Breast epithelium (tissue), 4 donors: ENCODE measurements at regions of chr2 and their contacts with region 1.

Region 1: GRCh38 chr2:149365826-149366583 is 35.6 kb downstream of the LYPD6 start:
- DNase-seq: no peak
- H3K4me3 ChIP-seq: no peak overlapping the region
- H3K27ac ChIP-seq: no peak overlapping the region
- H3K4me1 ChIP-seq: no peaks in the 10 kb centered on the region
- H3K27me3 ChIP-seq: no peaks in the 10 kb centered on the region
- CTCF ChIP-seq: no peak
- POLR2A ChIP-seq: no peak

Region 2: DNA sequence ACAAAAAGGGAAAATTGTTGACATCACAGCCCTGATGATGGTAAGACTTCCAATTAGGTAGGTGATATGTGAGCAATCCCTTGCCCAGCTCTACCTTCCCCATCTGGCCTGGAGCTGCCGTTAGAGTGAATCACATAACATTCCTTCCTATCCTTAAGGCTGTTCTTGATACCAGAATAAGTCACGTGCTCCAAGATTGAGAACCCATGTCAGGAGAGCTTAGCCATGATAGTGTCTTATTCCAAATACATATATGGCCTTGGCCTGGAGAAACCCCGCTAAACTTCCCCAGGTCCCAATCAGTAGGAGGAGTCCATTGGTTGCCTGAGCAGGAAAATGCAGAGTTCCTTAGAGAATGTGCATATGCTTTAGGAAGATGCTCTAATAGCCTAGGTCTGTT is 1591.2 kb before region 1 on chr2:
- intact Hi-C with region 1: loop called (anchors 5 kb)
- DNase-seq: no peak
- H3K4me3 ChIP-seq: no peak overlapping the region
- H3K27ac ChIP-seq: no peak overlapping the region
- H3K4me1 ChIP-seq: no peaks in the 10 kb centered on the region
- H3K27me3 ChIP-seq: no peaks in the 10 kb centered on the region
- CTCF ChIP-seq: no peak
- POLR2A ChIP-seq: no peak

Region 3: GRCh38 chr2:150125708-150126107 is 759.7 kb after region 1 on chr2:
- intact Hi-C with region 1: no loop called
- DNase-seq: no peak
- H3K4me3 ChIP-seq: no peak overlapping the region
- H3K27ac ChIP-seq: peak overlapping the region in 1 of 2 donors; percentile 9
- H3K4me1 ChIP-seq: no peaks in the 10 kb centered on the region
- H3K27me3 ChIP-seq: no peaks in the 10 kb centered on the region
- CTCF ChIP-seq: no peak
- POLR2A ChIP-seq: no peak

Region 4: DNA sequence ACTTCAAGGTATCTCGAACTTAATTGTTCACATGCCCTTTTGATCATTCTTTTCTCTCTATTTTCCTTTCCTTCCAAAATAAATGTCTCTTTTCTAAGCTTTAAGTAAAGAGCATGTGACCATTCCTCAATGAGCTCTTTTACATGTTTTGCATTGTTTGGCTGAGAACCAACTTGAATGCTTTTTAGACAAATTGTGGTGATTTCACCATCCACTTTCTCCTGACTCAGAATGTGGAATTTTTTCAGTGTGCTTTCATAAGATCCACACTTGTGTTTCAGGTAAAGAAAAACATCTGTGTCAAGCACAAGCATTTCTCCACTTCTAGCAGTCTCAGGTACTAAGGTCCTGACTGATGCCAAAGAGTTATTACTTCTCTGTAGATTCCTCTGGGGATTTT is 1885.0 kb after region 1 on chr2:
- intact Hi-C with region 1: loop called (anchors 5 kb)
- DNase-seq: no peak
- H3K4me3 ChIP-seq: no peak overlapping the region
- H3K27ac ChIP-seq: no peak overlapping the region
- H3K4me1 ChIP-seq: no peaks in the 10 kb centered on the region
- H3K27me3 ChIP-seq: no peaks in the 10 kb centered on the region
- CTCF ChIP-seq: no peak
- POLR2A ChIP-seq: no peak